A549 (cell line): ENCODE measurements at regions of chr4 and their contacts with region 1.

Region 1: DNA sequence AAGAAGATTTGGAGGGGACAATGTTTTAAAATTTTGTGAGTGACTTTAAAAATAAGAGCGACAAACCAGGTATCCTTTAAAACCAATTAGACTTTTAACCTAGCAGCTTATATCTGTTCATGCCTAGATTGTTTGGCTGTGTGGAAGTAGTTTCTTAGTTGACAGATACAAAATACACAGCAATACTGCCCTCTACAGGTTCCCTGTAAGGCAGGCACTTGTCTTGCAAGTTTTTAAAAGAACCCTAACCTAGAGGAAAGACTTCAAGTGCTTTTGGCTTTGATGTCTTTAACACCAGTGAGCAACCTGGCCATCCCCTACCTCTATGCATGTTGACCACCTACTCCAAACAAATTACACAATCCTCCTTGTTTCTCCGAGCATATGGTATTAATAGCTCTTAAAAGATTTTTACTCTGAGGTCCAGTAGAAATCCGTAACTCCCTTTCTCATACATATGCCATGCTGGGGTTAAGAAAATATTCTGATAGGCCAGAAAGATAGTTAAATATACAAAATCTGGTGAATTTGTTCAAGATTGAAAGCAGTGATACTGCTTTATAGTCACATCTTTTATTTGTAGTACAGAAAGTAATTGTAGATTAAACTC is 273.0 kb downstream of the ARHGAP24 start:
- DNase-seq: peak; percentile 7 to 80
- ATAC-seq: peak; percentile 24 to 84; a peak in 3 of 6 replicates
- H3K4me3 ChIP-seq: no peak overlapping the region
- H3K27ac ChIP-seq: no peak overlapping the region
- H3K4me1 ChIP-seq: peaks cover 22% of the 10 kb centered on the region
- CTCF ChIP-seq: peak; percentile 77
- EP300 ChIP-seq: no peak
- POLR2A ChIP-seq: no peak
- RAD21 ChIP-seq: peak; percentile 87 to 88

Region 2: DNA sequence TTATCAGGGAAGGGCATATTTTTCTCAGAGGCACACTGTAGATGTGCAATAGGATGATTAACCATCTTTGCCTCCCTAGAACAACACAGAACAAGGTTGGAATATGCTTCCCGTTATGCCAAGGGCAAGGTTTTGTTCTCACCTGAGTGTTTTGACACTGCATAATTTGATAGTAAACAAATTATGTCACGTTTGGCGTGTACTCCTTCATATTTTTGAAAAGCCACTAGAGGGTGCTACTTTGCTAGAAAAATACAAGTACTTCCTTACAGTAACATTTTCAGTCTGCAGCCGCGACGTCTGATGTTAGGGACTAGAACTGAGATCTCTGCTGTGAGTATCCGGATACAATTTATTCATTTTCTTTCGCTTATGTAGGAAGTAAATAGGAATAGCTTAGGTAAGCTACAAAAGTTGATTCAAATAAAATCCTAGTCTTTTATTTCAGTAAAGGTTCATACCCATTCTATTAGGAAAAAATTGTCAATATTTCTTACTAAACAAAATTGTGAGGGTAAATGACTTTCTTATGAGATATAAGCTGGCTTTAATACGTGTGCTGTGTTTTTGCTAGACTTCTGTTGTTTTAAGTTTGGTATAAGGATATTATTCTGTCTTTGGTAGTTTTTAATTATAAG is 600.4 kb before region 1 on chr4:
- CTCF ChIA-PET with region 1: interaction called, 20 read pairs
- POLR2A ChIA-PET with region 1: no interaction called
- DNase-seq: peak; percentile 13 to 66
- ATAC-seq: peak; percentile 54 to 82; a peak in 4 of 6 replicates
- H3K4me3 ChIP-seq: no peak overlapping the region
- H3K27ac ChIP-seq: no peak overlapping the region
- H3K4me1 ChIP-seq: no peaks in the 10 kb centered on the region
- CTCF ChIP-seq: peak; percentile 66
- EP300 ChIP-seq: no peak
- POLR2A ChIP-seq: no peak
- RAD21 ChIP-seq: peak; percentile 73 to 79

Region 3: DNA sequence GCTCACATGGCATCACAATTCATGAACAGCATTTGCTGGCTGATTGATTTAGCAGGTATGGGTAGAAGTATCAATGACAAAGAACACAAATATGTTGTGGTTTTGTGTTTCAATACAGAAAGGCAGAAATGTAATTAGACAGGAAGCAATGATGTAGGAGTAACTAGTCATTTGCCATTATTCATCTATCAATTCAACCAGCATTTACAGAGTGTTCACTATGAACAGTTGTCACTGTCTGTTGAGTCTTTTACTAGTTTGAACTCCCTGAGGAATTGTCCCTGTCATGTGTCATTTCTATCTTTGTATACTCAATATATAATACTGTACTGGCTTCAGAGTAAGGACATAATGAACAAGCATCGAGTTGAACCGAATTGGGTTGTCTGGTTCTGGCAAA is 324.6 kb before region 1 on chr4:
- CTCF ChIA-PET with region 1: interaction called, 11 read pairs
- POLR2A ChIA-PET with region 1: no interaction called
- DNase-seq: no peak
- ATAC-seq: no peak
- H3K4me3 ChIP-seq: no peak overlapping the region
- H3K27ac ChIP-seq: no peak overlapping the region
- H3K4me1 ChIP-seq: no peaks in the 10 kb centered on the region
- CTCF ChIP-seq: no peak
- EP300 ChIP-seq: no peak
- POLR2A ChIP-seq: no peak
- RAD21 ChIP-seq: no peak

Region 4: DNA sequence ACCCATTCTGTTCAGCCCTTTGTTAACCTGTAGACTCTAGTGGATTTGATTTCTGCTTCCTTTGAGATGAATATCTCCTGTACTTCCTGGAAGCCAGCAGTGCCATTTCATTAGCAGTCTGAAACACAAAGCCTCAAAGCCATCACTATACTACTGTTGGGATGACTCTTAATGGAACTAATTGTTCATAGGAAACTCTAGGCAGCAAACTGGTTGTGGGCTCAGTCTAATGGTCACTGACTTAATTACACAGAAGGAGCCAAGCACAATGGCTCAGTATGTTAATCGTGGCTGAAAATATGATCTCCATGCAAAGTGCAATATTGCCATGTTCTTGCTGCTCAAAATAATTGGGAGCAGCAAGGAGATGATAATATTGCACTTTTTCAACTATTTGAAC is 10.7 kb before region 1 on chr4:
- CTCF ChIA-PET with region 1: interaction called, 10 read pairs
- POLR2A ChIA-PET with region 1: no interaction called
- DNase-seq: no peak
- ATAC-seq: no peak
- H3K4me3 ChIP-seq: no peak overlapping the region
- H3K27ac ChIP-seq: no peak overlapping the region
- H3K4me1 ChIP-seq: peaks cover 29% of the 10 kb centered on the region; the same call in 2 of the 3 replicates
- CTCF ChIP-seq: no peak
- EP300 ChIP-seq: no peak
- POLR2A ChIP-seq: no peak
- RAD21 ChIP-seq: no peak

Region 5: GRCh38 chr4:85761803-85762528 is 14.0 kb after region 1 on chr4:
- CTCF ChIA-PET with region 1: interaction called, 10 read pairs
- POLR2A ChIA-PET with region 1: no interaction called
- DNase-seq: no peak
- ATAC-seq: no peak
- H3K4me3 ChIP-seq: no peak overlapping the region
- H3K27ac ChIP-seq: 0 out of 6 replicates have a peak overlapping the region, but pooled peaks of 1 of the 2 experiments have one; percentile 38
- H3K4me1 ChIP-seq: peaks cover 13% of the 10 kb centered on the region
- CTCF ChIP-seq: no peak
- EP300 ChIP-seq: no peak
- POLR2A ChIP-seq: no peak
- RAD21 ChIP-seq: no peak

Region 6: GRCh38 chr4:85812776-85813175 is 64.8 kb after region 1 on chr4:
- CTCF ChIA-PET with region 1: no interaction called
- POLR2A ChIA-PET with region 1: no interaction called
- DNase-seq: no peak
- ATAC-seq: no peak
- H3K4me3 ChIP-seq: no peak overlapping the region
- H3K27ac ChIP-seq: no peak overlapping the region
- H3K4me1 ChIP-seq: 0 out of 3 replicates have a peak, but pooled peaks cover 5% of the 10 kb centered on the region
- CTCF ChIP-seq: no peak
- EP300 ChIP-seq: no peak
- POLR2A ChIP-seq: no peak
- RAD21 ChIP-seq: no peak